Activated CD8-positive, alpha-beta T cell treated with anti-CD3 and anti-CD28 coated beads for 36 hours (primary cell): ENCODE measurements at regions of chr3 and their contacts with region 1.

Region 1: DNA sequence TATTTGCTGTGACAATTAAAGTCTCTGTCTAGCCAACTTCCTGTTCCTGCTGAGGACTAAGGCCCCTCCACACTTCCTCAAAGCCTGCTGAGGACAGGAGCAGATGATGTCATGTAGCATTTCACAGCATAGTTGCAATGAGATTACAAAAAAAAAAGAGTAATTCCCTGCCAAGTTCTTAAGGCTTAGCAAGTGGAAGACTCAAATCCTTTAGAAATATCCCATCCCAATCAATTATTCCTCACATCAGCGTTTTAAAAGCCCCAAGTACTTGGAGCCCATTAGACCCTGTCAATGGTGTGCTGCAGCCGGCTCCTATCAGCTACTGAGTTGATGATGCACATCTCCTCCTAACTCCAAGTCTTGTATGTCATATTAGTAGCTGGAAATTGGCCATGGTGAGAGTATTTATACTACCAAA is 51.7 kb downstream of the TRANK1 start:
- DNase-seq: peak; percentile 35
- ATAC-seq: peak; percentile 86
- H3K4me3 Mint-ChIP-seq: no peak overlapping the region
- H3K27ac Mint-ChIP-seq: peak overlapping the region; percentile 83
- H3K4me1 Mint-ChIP-seq: peaks cover 47% of the 10 kb centered on the region
- H3K27me3 Mint-ChIP-seq: no peaks in the 10 kb centered on the region
- CTCF ChIP-seq: no peak

Region 2: GRCh38 chr3:36579746-36580145 is 313.4 kb before region 1 on chr3:
- CTCF ChIA-PET with region 1: no interaction called
- POLR2A ChIA-PET with region 1: no interaction called
- intact Hi-C with region 1: no loop called
- DNase-seq: no peak
- ATAC-seq: no peak
- H3K4me3 Mint-ChIP-seq: no peak overlapping the region
- H3K27ac Mint-ChIP-seq: no peak overlapping the region
- H3K4me1 Mint-ChIP-seq: no peaks in the 10 kb centered on the region
- H3K27me3 Mint-ChIP-seq: no peaks in the 10 kb centered on the region
- CTCF ChIP-seq: no peak

Region 3: GRCh38 chr3:36876181-36876936 is 16.8 kb before region 1 on chr3:
- CTCF ChIA-PET with region 1: interaction called, 11 read pairs
- POLR2A ChIA-PET with region 1: interaction called, 4 read pairs
- intact Hi-C with region 1: no loop called
- DNase-seq: peak; percentile 20
- ATAC-seq: peak; percentile 94
- H3K4me3 Mint-ChIP-seq: peak overlapping the region; percentile 62
- H3K27ac Mint-ChIP-seq: peak overlapping the region; percentile 75
- H3K4me1 Mint-ChIP-seq: peaks cover 40% of the 10 kb centered on the region
- H3K27me3 Mint-ChIP-seq: no peaks in the 10 kb centered on the region
- CTCF ChIP-seq: no peak